ENCODE measurements at regions of chr10 and their contacts with region 1.

Region 1: DNA sequence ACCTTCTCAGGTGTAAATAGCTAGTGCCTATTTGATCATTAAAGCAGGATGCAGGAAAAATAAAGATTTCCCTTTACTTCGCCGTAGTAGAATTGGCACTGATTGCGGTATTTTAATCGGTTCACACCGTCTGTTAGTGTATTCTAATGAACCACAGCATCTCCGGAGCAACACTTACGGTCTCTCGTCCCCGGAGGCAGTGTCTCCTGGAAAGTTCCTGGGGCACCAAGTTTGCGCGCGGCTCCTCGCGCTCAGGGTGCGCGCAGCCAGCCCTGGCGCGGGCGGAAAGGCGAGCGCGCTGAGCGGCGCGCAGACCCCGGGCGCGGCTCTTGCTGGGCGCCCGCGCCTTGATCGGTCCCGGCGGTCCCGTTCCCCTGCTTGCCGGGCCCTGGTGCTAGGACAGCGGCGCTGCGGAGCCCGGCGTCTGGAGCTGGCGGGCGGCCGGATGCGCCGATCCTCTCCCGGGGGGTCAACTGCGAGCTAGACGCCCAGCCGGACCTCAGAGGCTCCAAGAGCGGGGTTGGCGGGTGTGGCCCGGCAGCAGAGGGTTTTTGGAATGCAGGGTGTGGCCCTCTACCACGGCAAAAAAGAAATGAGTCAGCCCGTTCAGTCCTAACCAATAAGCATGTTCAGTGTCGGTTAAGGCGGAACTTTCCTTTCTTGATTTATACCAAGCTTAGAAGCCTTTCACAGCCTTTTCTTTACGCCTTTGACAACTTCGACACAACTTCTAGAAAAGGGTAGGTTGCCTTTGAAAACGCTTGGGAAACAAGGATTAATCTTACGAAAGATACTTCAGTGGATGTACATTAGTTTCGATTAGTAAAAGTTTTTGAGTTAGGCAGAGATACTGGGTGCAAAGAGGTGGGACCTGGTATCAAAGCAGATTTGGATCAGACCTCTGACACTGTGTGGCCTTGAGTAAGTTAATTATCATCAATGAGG is 166.8 kb upstream of the ASAH2 start:
- DNase-seq: peak; percentile 62
- H3K4me3 Mint-ChIP-seq: peak overlapping the region; percentile 80
- H3K27ac Mint-ChIP-seq: no peak overlapping the region
- H3K4me1 Mint-ChIP-seq: peaks cover 32% of the 10 kb centered on the region
- H3K27me3 Mint-ChIP-seq: no peaks in the 10 kb centered on the region

Region 2: GRCh38 chr10:50291261-50291850 is 126.8 kb before region 1 on chr10:
- CTCF ChIA-PET with region 1: no interaction called
- POLR2A ChIA-PET with region 1: no interaction called
- intact Hi-C with region 1: loop called (anchors 1 kb)
- DNase-seq: no peak
- H3K4me3 Mint-ChIP-seq: no peak overlapping the region
- H3K27ac Mint-ChIP-seq: no peak overlapping the region
- H3K4me1 Mint-ChIP-seq: no peaks in the 10 kb centered on the region
- H3K27me3 Mint-ChIP-seq: no peaks in the 10 kb centered on the region

Region 3: GRCh38 chr10:50367732-50368131 is 50.4 kb before region 1 on chr10:
- CTCF ChIA-PET with region 1: interaction called, 15 read pairs
- POLR2A ChIA-PET with region 1: no interaction called
- intact Hi-C with region 1: loop called (anchors 1 kb)
- DNase-seq: peak; percentile 11
- H3K4me3 Mint-ChIP-seq: no peak overlapping the region
- H3K27ac Mint-ChIP-seq: no peak overlapping the region
- H3K4me1 Mint-ChIP-seq: peaks cover 5% of the 10 kb centered on the region
- H3K27me3 Mint-ChIP-seq: no peaks in the 10 kb centered on the region

Region 4: DNA sequence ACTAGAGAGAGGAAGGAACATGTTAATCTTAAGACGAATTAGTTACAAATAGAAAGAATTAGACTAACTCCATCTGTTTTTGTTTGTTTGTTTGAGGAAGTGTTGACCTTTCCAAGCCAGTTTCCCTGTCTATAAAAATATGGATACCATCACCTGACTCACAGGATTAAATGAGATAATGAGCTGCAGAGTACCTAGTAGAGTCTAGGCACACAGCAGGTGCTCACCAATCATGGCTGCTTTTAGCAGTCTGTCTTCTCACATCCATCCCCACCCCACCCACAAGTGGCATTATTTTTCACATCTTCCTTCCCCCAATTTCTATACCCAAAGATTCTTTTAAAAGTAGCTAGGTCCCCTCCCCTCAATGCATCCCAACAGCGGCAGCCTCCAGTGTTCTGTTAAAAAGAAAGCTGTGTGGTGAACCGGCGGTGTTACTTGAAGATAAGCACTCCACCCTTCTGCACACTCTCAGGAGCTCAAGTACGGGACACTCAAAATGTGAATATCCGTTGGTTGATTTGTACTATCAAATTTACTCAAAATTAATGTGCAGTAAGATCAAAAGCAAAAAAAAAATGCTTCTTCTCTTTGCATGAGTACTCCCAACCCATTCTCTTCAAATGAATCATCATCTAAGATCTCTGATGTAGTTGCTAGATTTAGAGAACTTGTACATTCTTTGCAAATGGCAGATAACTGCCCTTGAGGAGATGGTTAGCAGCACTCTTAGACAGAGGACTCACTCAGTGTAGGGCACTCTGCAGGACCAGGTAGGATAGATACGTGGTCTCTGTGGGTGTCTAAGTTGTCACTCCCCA is 21.5 kb before region 1 on chr10:
- CTCF ChIA-PET with region 1: interaction called, 8 read pairs
- POLR2A ChIA-PET with region 1: interaction called, 4 read pairs
- intact Hi-C with region 1: loop called (anchors 1 kb)
- DNase-seq: peak; percentile 51
- H3K4me3 Mint-ChIP-seq: peak overlapping the region; percentile 17
- H3K27ac Mint-ChIP-seq: peak overlapping the region; percentile 65
- H3K4me1 Mint-ChIP-seq: peaks cover 46% of the 10 kb centered on the region
- H3K27me3 Mint-ChIP-seq: no peaks in the 10 kb centered on the region

Measured in activated CD4-positive, alpha-beta memory T cell treated with anti-CD3 and anti-CD28 coated beads for 36 hours (primary cell).